ENCODE measurements at regions of chr4 and their contacts with region 1.

Region 1: DNA sequence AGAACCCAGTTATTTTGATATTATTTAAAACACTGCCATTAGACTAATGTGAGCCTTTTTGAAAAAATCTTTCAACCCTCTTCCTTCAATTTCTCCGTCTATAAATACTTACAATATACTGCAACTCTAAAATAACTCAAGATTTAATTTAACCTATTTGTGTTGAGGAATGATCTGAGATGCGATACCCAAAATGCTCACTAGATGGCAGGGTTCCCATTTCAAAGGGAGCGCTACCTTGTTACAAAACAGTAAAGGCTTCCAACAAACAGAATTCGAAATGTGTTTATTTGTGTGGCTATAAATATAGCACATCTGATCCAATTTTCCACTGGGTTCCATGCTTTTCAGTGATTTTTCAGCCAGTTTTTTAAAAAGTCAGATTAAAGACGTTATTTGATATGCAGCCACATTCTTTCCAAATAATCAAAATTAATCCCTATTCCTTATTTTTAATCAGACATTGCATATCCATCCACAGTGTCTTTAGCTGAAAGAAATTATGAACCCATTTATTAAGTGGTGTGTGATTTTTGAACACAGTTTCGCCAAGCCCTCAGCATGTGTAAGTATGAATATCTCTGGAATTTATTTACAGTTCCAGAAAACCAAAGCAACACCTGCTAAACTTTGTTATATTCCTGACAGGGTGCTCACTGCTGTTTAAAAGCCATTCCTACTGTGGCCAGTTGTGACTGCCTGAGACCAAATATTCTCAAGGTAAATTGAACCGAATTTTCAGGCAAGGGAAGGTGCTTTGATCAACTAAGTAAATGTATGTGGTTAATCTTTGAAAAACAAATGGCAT is 668.0 kb upstream of the LCORL start:
- DNase-seq: peak; percentile 69
- H3K4me3 ChIP-seq: no peak overlapping the region
- H3K27ac ChIP-seq: no peak overlapping the region
- H3K4me1 ChIP-seq: no peaks in the 10 kb centered on the region
- H3K27me3 ChIP-seq: no peaks in the 10 kb centered on the region
- CTCF ChIP-seq: peak; percentile 86

Region 2: GRCh38 chr4:18934197-18934596 is 244.7 kb after region 1 on chr4:
- CTCF ChIA-PET with region 1: no interaction called
- POLR2A ChIA-PET with region 1: no interaction called
- intact Hi-C with region 1: loop called (anchors 2 kb)
- DNase-seq: peak; percentile 7
- H3K4me3 ChIP-seq: no peak overlapping the region
- H3K27ac ChIP-seq: no peak overlapping the region
- H3K4me1 ChIP-seq: no peaks in the 10 kb centered on the region
- H3K27me3 ChIP-seq: no peaks in the 10 kb centered on the region
- CTCF ChIP-seq: 0 out of 2 replicates have a peak, but pooled peaks have one; percentile 30

Region 3: GRCh38 chr4:19151684-19152083 is 462.2 kb after region 1 on chr4:
- CTCF ChIA-PET with region 1: no interaction called
- POLR2A ChIA-PET with region 1: no interaction called
- intact Hi-C with region 1: no loop called
- DNase-seq: no peak
- H3K4me3 ChIP-seq: no peak overlapping the region
- H3K27ac ChIP-seq: no peak overlapping the region
- H3K4me1 ChIP-seq: no peaks in the 10 kb centered on the region
- H3K27me3 ChIP-seq: no peaks in the 10 kb centered on the region
- CTCF ChIP-seq: no peak

Region 4: GRCh38 chr4:19213388-19213787 is 523.9 kb after region 1 on chr4:
- CTCF ChIA-PET with region 1: no interaction called
- POLR2A ChIA-PET with region 1: no interaction called
- intact Hi-C with region 1: loop called (anchors 10 kb)
- DNase-seq: peak; percentile 21
- H3K4me3 ChIP-seq: no peak overlapping the region
- H3K27ac ChIP-seq: no peak overlapping the region
- H3K4me1 ChIP-seq: no peaks in the 10 kb centered on the region
- H3K27me3 ChIP-seq: no peaks in the 10 kb centered on the region
- CTCF ChIP-seq: no peak